HEK293T (cell line): ENCODE measurements at regions of chr17 and their contacts with region 1.

Region 1: GRCh38 chr17:42773290-42774035 is at the start of gene VPS25:
- DNase-seq: peak; percentile 86

Region 2: DNA sequence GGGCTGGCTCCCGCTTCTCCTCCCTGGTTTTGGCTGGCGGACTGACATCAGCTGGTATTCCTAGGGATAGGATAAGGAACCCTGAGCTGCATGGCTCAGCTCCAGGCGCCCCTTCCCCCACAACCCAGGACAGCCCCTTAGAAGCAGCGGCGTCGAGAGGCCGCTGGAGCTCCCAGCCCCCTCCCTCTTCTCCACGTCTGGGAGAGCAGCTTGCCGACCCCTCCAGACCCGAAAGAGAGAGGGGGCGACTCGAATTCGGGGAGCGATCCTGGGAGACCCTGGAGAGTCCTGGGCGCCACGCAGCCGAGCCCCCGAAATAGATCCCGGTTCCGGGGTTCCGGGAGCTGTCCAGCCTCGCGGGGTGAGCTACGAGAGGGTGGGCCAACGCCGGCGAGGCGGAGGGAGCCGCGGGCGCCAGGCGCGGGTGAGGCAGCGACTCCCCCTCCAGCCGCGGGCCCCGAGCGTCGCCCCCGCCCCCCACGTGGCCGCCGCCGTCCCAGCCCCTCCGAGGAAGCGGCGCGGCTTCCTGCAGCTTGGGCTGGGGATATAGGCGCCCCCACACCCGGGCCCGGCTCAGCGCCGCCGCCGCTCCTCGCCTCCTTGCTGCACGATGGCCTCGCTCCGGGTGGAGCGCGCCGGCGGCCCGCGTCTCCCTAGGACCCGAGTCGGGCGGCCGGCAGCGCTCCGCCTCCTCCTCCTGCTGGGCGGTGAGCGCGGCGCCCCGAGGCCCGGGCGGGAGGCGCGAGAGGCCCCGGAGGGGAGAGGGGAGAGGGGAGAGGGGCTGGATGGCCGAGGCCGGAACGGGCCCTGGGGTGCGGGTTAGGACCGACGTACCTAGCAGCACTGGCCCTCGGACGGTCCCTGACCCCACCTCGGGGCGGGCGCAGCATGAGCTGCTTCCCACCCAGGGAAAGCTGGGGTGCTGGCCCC is 12.5 kb before region 1 on chr17 and contains the start of gene RAMP2:
- CTCF ChIA-PET with region 1: interaction called, 10 read pairs
- POLR2A ChIA-PET with region 1: interaction called, 58 read pairs
- DNase-seq: no peak

Region 3: DNA sequence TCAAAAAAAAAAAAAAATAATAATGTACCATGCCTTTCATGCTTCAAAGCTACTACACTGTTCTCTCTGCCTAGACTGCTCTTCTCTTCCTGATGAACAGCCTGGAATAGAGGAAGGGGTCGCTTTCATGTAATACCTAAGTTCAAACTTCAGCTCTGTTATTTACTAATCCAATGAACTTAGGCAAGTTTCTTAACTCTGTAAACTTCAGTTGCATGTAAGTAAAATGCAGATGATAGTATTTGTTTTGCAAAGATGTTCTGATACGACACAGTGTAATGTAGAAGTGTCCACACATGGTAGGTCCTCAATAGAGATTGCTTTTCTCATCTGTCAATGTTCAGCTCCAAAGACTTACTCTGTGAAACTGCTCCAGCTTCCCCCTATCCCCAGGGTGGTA is 18.5 kb after region 1 on chr17:
- CTCF ChIA-PET with region 1: interaction called, 4 read pairs
- POLR2A ChIA-PET with region 1: interaction called, 20 read pairs
- DNase-seq: no peak

Region 4: GRCh38 chr17:42798383-42799380 is 25.2 kb after region 1 on chr17 and contains the starts of genes CNTD1 and COA3:
- CTCF ChIA-PET with region 1: no interaction called
- POLR2A ChIA-PET with region 1: interaction called, 16 read pairs
- DNase-seq: peak; percentile 95

Region 5: DNA sequence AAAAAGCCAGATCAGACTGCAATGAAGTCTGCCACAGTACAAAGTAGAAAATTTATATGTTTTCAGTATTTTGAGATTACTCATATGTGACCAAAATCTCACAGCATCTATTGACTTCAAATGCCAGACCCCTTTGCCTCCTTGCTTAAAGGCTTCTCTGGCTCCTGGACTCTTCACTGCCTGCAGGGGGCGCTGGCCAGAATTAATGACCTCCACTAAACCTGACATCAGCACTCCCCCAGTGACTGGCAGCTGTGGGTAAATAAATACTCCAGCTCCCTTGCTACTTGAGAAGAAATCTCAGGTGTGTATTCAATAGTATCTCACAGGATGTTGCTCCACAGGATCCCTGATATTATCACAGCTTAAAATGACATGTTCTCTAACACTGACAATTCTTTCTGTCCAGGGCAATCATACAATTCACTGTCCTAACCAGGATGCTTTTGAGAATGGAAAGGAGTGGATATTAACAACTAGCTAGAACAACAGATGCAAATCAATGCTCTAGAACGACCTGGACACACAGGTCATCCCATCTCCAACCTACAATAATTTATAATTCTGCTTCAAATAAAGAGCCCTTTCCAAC is 46.6 kb after region 1 on chr17:
- CTCF ChIA-PET with region 1: no interaction called
- POLR2A ChIA-PET with region 1: interaction called, 17 read pairs
- DNase-seq: peak; percentile 74

Region 6: GRCh38 chr17:42866631-42867575 is 93.4 kb after region 1 on chr17:
- CTCF ChIA-PET with region 1: no interaction called
- POLR2A ChIA-PET with region 1: no interaction called
- DNase-seq: no peak